Breast epithelium (tissue), 4 donors: ENCODE measurements at regions of chr9 and their contacts with region 1.

Region 1: DNA sequence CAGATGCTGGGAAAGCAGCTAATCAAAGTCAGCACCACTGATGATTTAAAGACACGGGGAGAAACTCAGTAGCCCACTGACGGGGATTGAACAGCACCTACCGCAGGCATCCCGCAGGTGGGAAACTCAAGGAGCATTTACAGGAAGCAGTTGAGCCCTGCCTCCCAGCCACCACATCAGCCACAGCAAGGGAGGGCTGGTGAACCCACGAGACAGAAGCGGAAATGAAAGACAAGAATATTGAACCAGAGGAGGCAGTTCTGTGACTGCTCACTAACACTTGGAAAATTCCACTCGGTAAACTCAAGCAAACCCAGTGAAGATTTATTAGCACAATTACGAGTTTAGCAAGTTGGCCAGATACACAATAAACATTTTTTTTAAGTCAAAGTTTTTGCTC is 10.6 kb upstream of the FAM163B start:
- DNase-seq: no peak
- H3K4me3 ChIP-seq: no peak overlapping the region
- H3K27ac ChIP-seq: no peak overlapping the region
- H3K4me1 ChIP-seq: no peaks in the 10 kb centered on the region
- H3K27me3 ChIP-seq: peaks cover 0 to 49% of the 10 kb centered on the region in 2 donors
- CTCF ChIP-seq: no peak
- POLR2A ChIP-seq: no peak

Region 2: GRCh38 chr9:131839281-131840084 is 1780.3 kb before region 1 on chr9:
- intact Hi-C with region 1: loop called (anchors 5 kb)
- DNase-seq: no peak
- H3K4me3 ChIP-seq: no peak overlapping the region
- H3K27ac ChIP-seq: no peak overlapping the region
- H3K4me1 ChIP-seq: no peaks in the 10 kb centered on the region
- H3K27me3 ChIP-seq: peaks cover 0 to 16% of the 10 kb centered on the region in 2 donors
- CTCF ChIP-seq: no peak
- POLR2A ChIP-seq: no peak

Region 3: GRCh38 chr9:133726401-133727276 is 106.8 kb after region 1 on chr9:
- intact Hi-C with region 1: no loop called
- DNase-seq: peak; percentile 37 to 51
- H3K4me3 ChIP-seq: no peak overlapping the region
- H3K27ac ChIP-seq: no peak overlapping the region
- H3K4me1 ChIP-seq: no peaks in the 10 kb centered on the region
- H3K27me3 ChIP-seq: no peaks in the 10 kb centered on the region
- CTCF ChIP-seq: peak in 2 of 3 donors; percentile 16 to 23
- POLR2A ChIP-seq: no peak

Region 4: GRCh38 chr9:134014946-134015345 is 395.2 kb after region 1 on chr9:
- intact Hi-C with region 1: no loop called
- DNase-seq: no peak
- H3K4me3 ChIP-seq: no peak overlapping the region
- H3K27ac ChIP-seq: no peak overlapping the region
- H3K4me1 ChIP-seq: no peaks in the 10 kb centered on the region
- H3K27me3 ChIP-seq: no peaks in the 10 kb centered on the region
- CTCF ChIP-seq: no peak
- POLR2A ChIP-seq: no peak